PC-9 (cell line): ENCODE measurements at regions of chr12 and their contacts with region 1.

Region 1: GRCh38 chr12:119544765-119545625 is 48.6 kb upstream of the TMEM233 start:
- DNase-seq: peak; percentile 39 to 51
- H3K4me3 ChIP-seq: no peak overlapping the region
- H3K27ac ChIP-seq: no peak overlapping the region
- H3K4me1 ChIP-seq: no peaks in the 10 kb centered on the region; the same call in 1 of the 2 replicates
- H3K27me3 ChIP-seq: no peaks in the 10 kb centered on the region
- CTCF ChIP-seq: peak; percentile 90

Region 2: DNA sequence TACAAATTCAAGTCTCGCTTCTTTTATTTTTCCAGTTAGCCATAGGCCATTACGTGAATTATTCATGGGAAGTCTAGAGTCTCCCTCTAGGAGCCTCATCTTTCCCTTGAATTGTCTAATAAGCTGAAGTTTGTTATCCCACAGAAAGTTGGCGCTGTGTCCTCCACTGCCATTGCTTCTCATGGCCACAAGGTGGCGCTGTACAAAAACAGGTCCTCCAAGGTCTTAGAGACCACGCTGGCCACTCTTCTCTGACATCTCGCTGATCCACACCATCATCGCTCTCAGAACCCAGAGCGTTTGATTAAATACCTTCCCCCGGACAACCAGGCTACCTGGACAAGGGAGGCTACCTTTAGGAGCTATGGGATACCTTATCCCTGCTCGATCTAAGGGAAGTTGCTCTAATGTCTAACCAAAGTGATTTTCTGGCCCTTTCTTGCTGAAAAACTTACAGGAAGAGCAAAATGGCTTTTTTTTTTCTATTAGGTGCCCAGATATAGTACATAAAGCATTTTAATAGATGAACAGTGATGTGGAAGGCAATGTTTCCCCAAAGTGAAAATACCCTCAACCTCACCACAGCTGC is 100.4 kb before region 1 on chr12:
- CTCF ChIA-PET with region 1: interaction called, 3 read pairs
- POLR2A ChIA-PET with region 1: no interaction called
- intact Hi-C with region 1: loop called (anchors 2 kb)
- DNase-seq: peak; percentile 21 to 49
- H3K4me3 ChIP-seq: no peak overlapping the region
- H3K27ac ChIP-seq: no peak overlapping the region
- H3K4me1 ChIP-seq: peaks cover 11% of the 10 kb centered on the region; the same call in 1 of the 2 replicates
- H3K27me3 ChIP-seq: peaks cover 5% of the 10 kb centered on the region; the same call in 1 of the 2 replicates
- CTCF ChIP-seq: peak; percentile 92

Region 3: GRCh38 chr12:119621878-119622277 is 76.9 kb after region 1 on chr12:
- CTCF ChIA-PET with region 1: no interaction called
- POLR2A ChIA-PET with region 1: no interaction called
- intact Hi-C with region 1: no loop called
- DNase-seq: no peak
- H3K4me3 ChIP-seq: no peak overlapping the region
- H3K27ac ChIP-seq: no peak overlapping the region
- H3K4me1 ChIP-seq: no peaks in the 10 kb centered on the region
- H3K27me3 ChIP-seq: 0 out of 2 replicates have a peak, but pooled peaks cover 3% of the 10 kb centered on the region
- CTCF ChIP-seq: no peak

Region 4: DNA sequence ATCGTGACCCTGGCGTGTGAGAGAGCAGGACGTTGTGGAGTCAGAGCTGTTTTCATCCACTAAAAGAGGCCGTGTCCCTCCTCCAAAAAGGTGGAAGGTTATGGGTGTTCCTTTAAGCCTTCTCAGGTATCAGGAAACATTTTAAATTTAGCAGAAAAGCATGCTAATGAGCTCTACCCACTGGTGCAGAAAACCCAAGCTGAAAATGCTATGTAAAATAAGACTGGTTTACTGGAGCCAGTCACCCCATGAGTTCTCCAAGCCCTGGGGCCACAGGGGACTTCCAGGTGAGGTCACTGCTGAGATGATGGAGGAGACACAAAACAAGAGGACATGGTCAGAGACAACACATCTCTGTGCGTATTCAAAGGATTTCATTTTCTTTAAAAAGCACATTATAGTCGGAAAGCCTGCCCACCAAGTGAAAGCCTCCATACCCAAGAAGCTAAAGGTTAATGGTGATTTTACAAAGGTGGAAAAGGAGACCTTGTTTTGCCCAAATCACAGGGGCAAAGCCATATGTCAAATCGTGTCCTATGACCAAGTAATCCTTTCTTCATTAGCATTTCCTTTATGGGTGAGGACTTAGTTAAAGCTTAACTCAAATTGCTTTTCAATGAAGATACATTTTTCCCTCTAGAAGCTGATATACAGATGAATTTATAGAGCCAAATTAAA is 137.1 kb after region 1 on chr12:
- CTCF ChIA-PET with region 1: no interaction called
- POLR2A ChIA-PET with region 1: no interaction called
- intact Hi-C with region 1: no loop called
- DNase-seq: peak in 1 of 2 experiments; percentile 34
- H3K4me3 ChIP-seq: no peak overlapping the region
- H3K27ac ChIP-seq: no peak overlapping the region
- H3K4me1 ChIP-seq: no peaks in the 10 kb centered on the region
- H3K27me3 ChIP-seq: no peaks in the 10 kb centered on the region
- CTCF ChIP-seq: no peak

Region 5: GRCh38 chr12:119835068-119835467 is 290.1 kb after region 1 on chr12:
- CTCF ChIA-PET with region 1: no interaction called
- POLR2A ChIA-PET with region 1: no interaction called
- intact Hi-C with region 1: no loop called
- DNase-seq: no peak
- H3K4me3 ChIP-seq: no peak overlapping the region
- H3K27ac ChIP-seq: no peak overlapping the region
- H3K4me1 ChIP-seq: no peaks in the 10 kb centered on the region
- H3K27me3 ChIP-seq: no peaks in the 10 kb centered on the region
- CTCF ChIP-seq: no peak